AG04450 (cell line): ENCODE measurements at regions of chr9 and their contacts with region 1.

Region 1: GRCh38 chr9:109440797-109441287 is 57.3 kb downstream of the PTPN3 start:
- DNase-seq: peak; percentile 70
- H3K4me3 ChIP-seq: no peak overlapping the region
- H3K27ac ChIP-seq: no peak overlapping the region
- H3K27me3 ChIP-seq: no peaks in the 10 kb centered on the region
- CTCF ChIP-seq: peak; percentile 84

Region 2: DNA sequence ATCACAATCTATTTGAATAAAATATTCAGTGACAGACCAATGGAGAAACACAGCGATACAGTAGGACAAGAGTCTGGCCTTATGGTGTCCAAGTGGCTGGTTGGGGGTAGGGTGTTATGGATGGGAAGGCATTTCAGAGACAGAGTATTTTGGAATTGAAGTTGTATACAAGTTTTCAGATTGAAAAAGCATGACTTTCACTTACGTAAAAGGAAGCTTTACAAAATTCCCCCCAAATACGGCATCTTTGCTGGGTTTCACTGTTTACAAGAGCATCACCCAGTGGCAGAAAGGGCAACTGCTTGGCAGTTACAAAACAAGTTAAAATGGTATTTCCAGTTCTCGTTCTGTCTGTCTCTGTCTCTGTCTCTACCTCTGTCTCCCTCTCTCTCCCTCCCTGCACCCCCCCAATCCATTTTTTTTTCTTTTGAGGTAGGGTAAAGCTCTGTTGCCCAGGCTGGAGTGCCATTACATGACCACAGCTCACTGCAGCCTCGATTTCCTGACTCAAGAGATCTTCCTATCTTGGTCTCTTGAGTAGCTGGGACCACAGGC is 29.0 kb before region 1 on chr9:
- CTCF ChIA-PET with region 1: interaction called, 11 read pairs
- POLR2A ChIA-PET with region 1: no interaction called
- DNase-seq: peak; percentile 16
- H3K4me3 ChIP-seq: no peak overlapping the region
- H3K27ac ChIP-seq: no peak overlapping the region
- H3K27me3 ChIP-seq: no peaks in the 10 kb centered on the region
- CTCF ChIP-seq: peak; percentile 79

Region 3: DNA sequence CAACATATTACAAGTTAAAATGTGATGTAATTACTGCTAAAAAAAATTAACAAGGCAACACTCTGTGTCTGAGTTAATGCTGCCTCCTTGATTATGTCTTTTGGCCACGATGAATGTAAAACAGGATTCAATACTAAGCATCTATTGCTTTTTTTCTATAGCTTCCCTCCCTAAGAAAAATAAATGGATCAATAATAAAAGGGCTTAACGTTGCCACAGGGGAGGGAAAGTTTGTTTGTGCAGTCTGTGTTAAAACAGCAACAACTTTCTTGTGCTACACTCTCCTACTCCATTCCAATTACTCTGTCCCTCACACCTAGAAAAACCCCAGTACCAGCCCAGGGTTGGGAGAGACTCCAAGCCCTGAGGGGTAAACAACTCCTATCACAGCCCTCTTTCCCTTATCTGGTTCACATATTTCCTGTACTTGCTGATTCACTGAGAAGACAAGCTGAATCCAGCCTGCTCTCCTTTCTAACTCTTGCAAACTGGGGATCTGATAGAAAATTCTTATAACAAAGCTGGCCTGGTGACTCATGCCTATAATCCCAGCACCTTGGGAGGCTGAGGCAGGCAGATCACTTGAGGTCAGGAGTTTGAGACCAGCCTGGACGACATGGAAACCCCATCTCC is 12.5 kb after region 1 on chr9:
- CTCF ChIA-PET with region 1: interaction called, 28 read pairs
- POLR2A ChIA-PET with region 1: interaction called, 3 read pairs
- DNase-seq: peak; percentile 27
- H3K4me3 ChIP-seq: no peak overlapping the region
- H3K27ac ChIP-seq: peak overlapping the region; percentile 13
- H3K27me3 ChIP-seq: no peaks in the 10 kb centered on the region
- CTCF ChIP-seq: no peak

Region 4: DNA sequence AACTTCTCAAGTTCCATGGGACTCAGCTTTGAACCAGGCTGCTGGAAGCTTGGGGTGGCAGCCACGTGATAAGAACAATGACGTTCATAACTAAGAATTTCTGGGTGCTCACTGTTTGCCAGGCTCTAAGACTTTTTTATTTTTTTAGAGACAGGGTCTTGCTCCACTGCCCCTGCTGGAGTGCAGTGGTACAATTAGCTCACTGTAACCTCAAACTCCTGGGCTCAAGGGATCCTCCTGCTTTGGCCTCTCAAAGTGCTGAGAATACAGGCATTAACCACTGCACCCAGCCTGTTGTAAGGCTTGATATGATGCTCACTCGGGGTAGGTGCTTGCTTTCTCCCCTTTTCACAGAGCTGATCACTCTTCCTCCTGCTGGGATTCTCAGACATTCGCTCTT is 18.6 kb after region 1 on chr9:
- CTCF ChIA-PET with region 1: interaction called, 19 read pairs
- POLR2A ChIA-PET with region 1: no interaction called
- DNase-seq: no peak
- H3K4me3 ChIP-seq: no peak overlapping the region
- H3K27ac ChIP-seq: no peak overlapping the region
- H3K27me3 ChIP-seq: no peaks in the 10 kb centered on the region
- CTCF ChIP-seq: no peak

Region 5: DNA sequence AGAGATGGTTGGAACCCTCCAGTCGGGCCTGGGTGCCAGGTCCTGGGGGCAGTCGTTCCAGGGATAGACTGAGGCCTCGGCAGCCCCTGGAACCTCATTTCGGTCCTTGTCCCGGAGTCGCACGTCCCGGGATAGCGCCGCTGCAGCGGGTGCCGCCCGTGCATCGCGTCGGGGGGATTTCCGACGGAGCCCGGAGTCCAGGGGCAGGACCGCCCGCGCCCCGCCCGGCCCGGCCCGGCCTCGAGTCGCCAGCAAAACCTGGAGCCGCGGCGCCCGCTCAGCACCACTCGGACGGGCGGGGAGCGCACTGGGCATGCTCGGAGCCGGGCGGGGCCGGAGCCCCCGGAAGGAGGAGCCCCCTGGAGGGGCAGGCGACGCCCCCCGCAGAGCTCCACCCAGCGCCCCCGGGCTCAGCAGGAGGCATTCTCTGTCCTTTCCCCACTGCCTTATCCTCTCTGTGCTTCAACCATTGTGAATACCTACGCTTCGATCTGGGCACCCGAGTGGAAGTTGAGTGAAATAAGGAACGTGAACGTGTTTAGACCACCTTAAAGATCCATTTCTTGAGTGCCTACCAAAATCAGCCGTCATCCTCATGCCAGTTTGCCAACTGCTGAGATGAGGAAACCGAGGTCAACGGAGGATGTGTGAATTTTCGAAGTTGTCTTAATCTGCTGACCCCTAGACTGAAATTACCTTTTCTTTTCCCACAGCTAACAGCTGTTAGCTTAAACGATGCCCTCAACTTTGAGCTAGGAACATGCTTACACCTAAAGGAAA is 59.0 kb after region 1 on chr9:
- CTCF ChIA-PET with region 1: interaction called, 11 read pairs
- POLR2A ChIA-PET with region 1: no interaction called
- DNase-seq: no peak
- H3K4me3 ChIP-seq: peak overlapping the region; percentile 42
- H3K27ac ChIP-seq: no peak overlapping the region
- H3K27me3 ChIP-seq: peaks cover 59% of the 10 kb centered on the region
- CTCF ChIP-seq: no peak

Region 6: DNA sequence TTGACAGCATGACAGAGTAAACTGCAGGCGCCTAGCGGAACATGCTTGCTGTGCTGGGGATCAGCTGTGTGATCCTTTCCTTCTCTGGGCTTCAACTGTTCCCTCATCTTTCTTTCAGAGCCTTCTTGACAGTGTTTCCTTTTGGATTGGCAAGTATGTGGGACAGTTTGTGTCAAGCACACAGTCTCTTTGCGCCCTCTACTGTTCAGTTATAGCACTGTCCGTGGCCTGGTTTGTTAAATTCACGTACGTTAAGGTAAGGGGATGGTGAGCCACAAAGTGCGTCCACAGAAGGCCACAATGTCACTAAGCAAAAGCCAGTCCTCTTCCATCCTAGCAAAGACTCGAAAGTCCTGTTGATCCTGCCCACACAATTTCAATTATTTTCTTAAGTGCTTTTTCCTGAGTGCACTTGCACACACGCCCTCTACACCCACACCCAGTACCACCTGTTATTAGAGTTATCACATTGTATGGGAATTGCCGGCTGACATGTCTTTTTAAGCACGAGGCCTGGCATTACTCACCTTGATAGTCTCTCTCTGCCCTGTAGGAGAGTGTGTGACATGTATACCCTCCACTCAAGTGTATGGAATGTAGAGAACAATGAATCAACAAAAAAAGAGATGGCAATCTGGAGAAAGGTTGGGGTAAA is 79.8 kb after region 1 on chr9:
- CTCF ChIA-PET with region 1: interaction called, 31 read pairs
- POLR2A ChIA-PET with region 1: no interaction called
- DNase-seq: peak; percentile 29
- H3K4me3 ChIP-seq: no peak overlapping the region
- H3K27ac ChIP-seq: no peak overlapping the region
- H3K27me3 ChIP-seq: peaks cover 9% of the 10 kb centered on the region
- CTCF ChIP-seq: peak; percentile 95